Right cardiac atrium (tissue), 5 donors: ENCODE measurements at regions of chr9 and their contacts with region 1.

Region 1: GRCh38 chr9:96232539-96233241 is 69.3 kb downstream of the HSD17B3 start:
- DNase-seq: peak; percentile 78 to 90 (median 84)
- ATAC-seq: peak; percentile 90 to 94
- H3K4me3 ChIP-seq: no peak overlapping the region
- H3K27ac ChIP-seq: peak overlapping the region; percentile 77
- H3K4me1 ChIP-seq: peaks cover 1% of the 10 kb centered on the region
- H3K27me3 ChIP-seq: peaks cover 3% of the 10 kb centered on the region

Region 2: GRCh38 chr9:96136992-96137670 is 95.6 kb before region 1 on chr9:
- intact Hi-C with region 1: no loop called
- DNase-seq: peak in 1 of 3 donors; percentile 85
- ATAC-seq: peak in 1 of 2 donors; percentile 63
- H3K4me3 ChIP-seq: no peak overlapping the region
- H3K27ac ChIP-seq: peak overlapping the region; percentile 13
- H3K4me1 ChIP-seq: no peaks in the 10 kb centered on the region
- H3K27me3 ChIP-seq: no peaks in the 10 kb centered on the region

Region 3: GRCh38 chr9:96299823-96300222 is 67.1 kb after region 1 on chr9:
- intact Hi-C with region 1: loop called in 1 of 4 experiments (anchors 10 kb)
- DNase-seq: no peak
- ATAC-seq: no peak
- H3K4me3 ChIP-seq: no peak overlapping the region
- H3K27ac ChIP-seq: no peak overlapping the region
- H3K4me1 ChIP-seq: no peaks in the 10 kb centered on the region
- H3K27me3 ChIP-seq: no peaks in the 10 kb centered on the region

Region 4: DNA sequence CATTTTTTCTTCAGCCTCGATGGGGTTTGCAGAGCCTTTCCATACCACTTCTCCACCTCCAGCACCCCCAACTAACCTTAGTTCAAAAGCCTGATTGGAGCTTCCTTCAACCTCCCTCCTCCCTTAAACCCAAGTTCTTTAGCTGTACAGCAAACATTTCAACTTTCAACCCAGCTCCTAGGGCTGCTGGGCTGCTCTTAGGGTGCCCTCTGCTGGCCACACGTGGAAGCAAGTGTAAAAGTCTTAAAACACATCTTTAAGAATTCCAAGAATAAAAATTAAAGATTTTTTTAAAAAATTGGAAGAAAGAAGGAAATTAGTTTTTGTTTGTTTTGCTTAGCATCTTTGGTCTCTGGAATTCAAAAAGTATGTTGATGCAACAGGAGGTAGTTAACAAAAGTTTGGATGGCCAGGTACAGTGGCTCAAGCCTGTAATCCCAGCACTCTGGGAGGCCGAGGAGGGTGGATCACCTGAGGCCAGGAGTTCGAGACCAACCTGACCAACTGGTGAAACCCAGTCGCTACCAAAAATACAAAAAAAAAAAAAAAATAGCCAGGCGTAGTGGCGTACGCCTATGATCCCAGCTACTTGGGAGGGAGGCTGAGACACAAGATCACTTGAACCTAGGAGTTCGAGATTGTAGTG is 84.8 kb after region 1 on chr9:
- intact Hi-C with region 1: loop called in 2 of 4 experiments (anchors 2 to 5 kb)
- DNase-seq: peak in 2 of 3 donors; percentile 73 to 84
- ATAC-seq: peak; percentile 73 to 79
- H3K4me3 ChIP-seq: no peak overlapping the region
- H3K27ac ChIP-seq: no peak overlapping the region
- H3K4me1 ChIP-seq: no peaks in the 10 kb centered on the region
- H3K27me3 ChIP-seq: no peaks in the 10 kb centered on the region

Region 5: DNA sequence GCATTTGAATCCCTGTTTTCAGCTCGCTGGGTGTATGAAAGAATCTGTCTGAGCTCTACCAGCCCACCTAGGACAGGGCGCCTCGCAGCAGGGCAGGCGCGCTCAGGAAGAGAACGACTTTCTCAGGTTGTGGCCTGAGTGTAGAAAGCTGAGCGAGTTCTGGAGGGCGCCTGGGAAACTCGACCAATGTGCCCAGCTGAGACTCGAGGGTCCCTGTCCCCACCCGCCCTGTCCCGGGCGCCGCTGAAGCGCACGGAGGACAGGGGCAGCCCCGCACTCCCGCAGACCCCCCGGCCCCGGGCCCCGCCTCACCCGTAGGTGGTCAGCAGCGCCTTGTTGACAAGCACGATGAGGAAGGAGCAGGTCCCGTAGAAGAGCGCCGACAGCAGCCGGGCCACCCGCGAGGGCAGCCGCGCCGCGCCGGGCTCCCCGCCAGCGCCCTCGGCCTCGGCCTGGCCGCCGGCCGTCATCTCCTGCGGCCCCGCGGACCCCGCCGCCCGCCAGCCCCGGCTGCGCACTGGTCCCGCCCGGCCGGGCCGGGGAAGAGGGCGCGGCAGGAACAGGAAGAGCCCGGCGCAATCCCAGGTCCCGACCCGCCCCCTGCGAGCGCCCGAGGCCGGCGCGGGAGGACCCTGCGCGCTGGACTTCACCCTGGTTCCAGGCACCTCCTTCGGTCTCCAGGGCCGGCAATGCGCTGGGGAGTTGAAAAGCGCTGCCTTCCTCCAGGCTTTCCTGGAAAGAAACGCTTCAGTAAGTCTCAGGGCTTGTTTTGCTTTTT is 150.7 kb after region 1 on chr9 and contains the start of gene SLC35D2:
- intact Hi-C with region 1: no loop called
- DNase-seq: peak; percentile 73 to 89 (median 88)
- ATAC-seq: peak; percentile 97 to 98
- H3K4me3 ChIP-seq: peak within 1 kb of the TSS; percentile 100
- H3K27ac ChIP-seq: peak within 1 kb of the TSS; percentile 94
- H3K4me1 ChIP-seq: peaks cover 4% of the 10 kb centered on the region
- H3K27me3 ChIP-seq: no peaks in the 10 kb centered on the region
- total RNA-seq, gene SLC35D2: 13.0 to 17.9 (median 15.2) TPM

Region 6: GRCh38 chr9:96555567-96556386 is 323.1 kb after region 1 on chr9:
- intact Hi-C with region 1: no loop called
- DNase-seq: no peak
- ATAC-seq: peak; percentile 27 to 57
- H3K4me3 ChIP-seq: no peak overlapping the region
- H3K27ac ChIP-seq: peak overlapping the region; percentile 54
- H3K4me1 ChIP-seq: no peaks in the 10 kb centered on the region
- H3K27me3 ChIP-seq: no peaks in the 10 kb centered on the region